Caco-2 (cell line): ENCODE measurements at regions of chr11 and their contacts with region 1.

Region 1: DNA sequence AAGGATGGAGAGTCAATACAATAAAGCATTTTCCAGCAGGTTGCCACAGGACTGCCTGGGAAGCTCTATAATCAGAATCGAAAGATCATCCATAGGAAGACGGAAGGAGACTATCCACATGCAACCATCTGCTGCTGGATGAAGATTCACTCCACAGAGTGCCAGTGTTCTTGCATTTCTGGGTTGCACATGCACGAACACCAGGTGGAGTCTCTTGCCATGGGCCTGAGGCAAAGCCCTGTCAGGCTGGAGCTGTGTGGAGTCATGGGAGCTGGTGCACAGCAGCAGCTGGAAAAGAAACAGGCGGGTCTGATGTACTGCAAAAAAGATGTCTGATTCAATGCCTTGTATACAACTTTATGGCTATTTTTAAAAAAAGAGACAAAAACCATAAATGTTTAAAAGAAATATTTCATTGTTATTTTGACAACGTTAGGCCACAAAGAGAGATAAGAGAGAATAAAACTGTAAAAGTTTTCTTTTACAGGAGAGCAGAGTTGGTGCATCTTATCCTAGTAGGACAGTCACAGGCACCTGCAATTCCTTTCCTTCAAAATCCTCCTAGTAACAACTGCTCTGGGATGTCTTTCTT is 12.9 kb upstream of the FAT3 start:
- DNase-seq: peak; percentile 80 to 82
- H3K4me3 ChIP-seq: no peak overlapping the region
- H3K4me3 Mint-ChIP-seq: no peak overlapping the region
- H3K27ac Mint-ChIP-seq: no peak overlapping the region
- H3K4me1 ChIP-seq: peaks cover 11% of the 10 kb centered on the region; the same call in 1 of the 2 replicates
- H3K4me1 Mint-ChIP-seq: peaks cover 17% of the 10 kb centered on the region
- H3K27me3 ChIP-seq: no peaks in the 10 kb centered on the region
- H3K27me3 Mint-ChIP-seq: no peaks in the 10 kb centered on the region
- CTCF ChIP-seq: peak; percentile 85 to 90

Region 2: DNA sequence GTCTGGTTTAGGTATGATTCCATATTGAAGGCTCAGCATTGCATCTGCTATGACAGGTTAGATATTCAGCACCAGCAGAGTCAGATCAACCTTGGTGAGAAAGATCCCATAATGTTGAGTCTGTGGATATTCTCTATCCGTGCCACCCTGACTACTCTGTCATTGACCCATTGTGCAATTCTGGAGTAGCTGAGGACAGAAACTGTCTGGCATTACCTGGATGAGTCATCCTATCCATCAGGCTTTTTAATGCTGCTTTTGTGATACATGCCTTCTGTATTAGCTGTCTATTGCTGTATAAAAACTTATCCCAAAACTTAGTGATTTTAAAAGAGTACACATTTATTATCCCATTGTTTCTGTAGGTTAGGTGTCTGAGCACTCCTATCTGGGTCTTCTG is 176.2 kb before region 1 on chr11:
- CTCF ChIA-PET with region 1: no interaction called
- POLR2A ChIA-PET with region 1: no interaction called
- intact Hi-C with region 1: no loop called
- DNase-seq: no peak
- H3K4me3 ChIP-seq: no peak overlapping the region
- H3K4me3 Mint-ChIP-seq: no peak overlapping the region
- H3K27ac Mint-ChIP-seq: no peak overlapping the region
- H3K4me1 ChIP-seq: no peaks in the 10 kb centered on the region
- H3K4me1 Mint-ChIP-seq: no peaks in the 10 kb centered on the region
- H3K27me3 ChIP-seq: no peaks in the 10 kb centered on the region
- H3K27me3 Mint-ChIP-seq: no peaks in the 10 kb centered on the region
- CTCF ChIP-seq: no peak

Region 3: GRCh38 chr11:92136797-92137196 is 74.9 kb before region 1 on chr11:
- CTCF ChIA-PET with region 1: no interaction called
- POLR2A ChIA-PET with region 1: no interaction called
- intact Hi-C with region 1: no loop called
- DNase-seq: peak in 1 of 2 experiments; percentile 39
- H3K4me3 ChIP-seq: no peak overlapping the region
- H3K4me3 Mint-ChIP-seq: no peak overlapping the region
- H3K27ac Mint-ChIP-seq: no peak overlapping the region
- H3K4me1 ChIP-seq: no peaks in the 10 kb centered on the region
- H3K4me1 Mint-ChIP-seq: no peaks in the 10 kb centered on the region
- H3K27me3 ChIP-seq: no peaks in the 10 kb centered on the region
- H3K27me3 Mint-ChIP-seq: no peaks in the 10 kb centered on the region
- CTCF ChIP-seq: peak; percentile 31 to 68

Region 4: DNA sequence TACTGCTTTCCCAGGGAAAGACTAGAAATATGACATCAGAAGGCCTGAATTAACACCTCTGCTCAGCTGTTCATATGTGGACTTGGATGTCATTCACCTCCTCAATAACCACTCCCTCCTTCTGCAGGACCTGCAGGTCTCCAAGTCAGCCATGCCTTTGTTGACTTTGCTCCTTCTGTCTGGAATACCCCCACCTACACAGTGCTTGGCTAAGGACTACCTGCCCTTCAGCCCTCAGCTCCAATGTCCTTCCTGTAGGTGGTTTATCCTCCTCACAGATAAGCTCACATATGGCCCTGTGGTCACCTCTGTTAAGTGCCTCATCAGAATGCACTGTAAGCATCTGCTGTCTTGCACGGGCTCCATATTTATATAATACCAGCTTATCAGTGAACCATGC is 13.4 kb before region 1 on chr11:
- CTCF ChIA-PET with region 1: no interaction called
- POLR2A ChIA-PET with region 1: no interaction called
- intact Hi-C with region 1: no loop called
- DNase-seq: no peak
- H3K4me3 ChIP-seq: no peak overlapping the region
- H3K4me3 Mint-ChIP-seq: no peak overlapping the region
- H3K27ac Mint-ChIP-seq: no peak overlapping the region
- H3K4me1 ChIP-seq: no peaks in the 10 kb centered on the region
- H3K4me1 Mint-ChIP-seq: no peaks in the 10 kb centered on the region
- H3K27me3 ChIP-seq: no peaks in the 10 kb centered on the region
- H3K27me3 Mint-ChIP-seq: no peaks in the 10 kb centered on the region
- CTCF ChIP-seq: no peak

Region 5: GRCh38 chr11:92269021-92269420 is 57.3 kb after region 1 on chr11:
- CTCF ChIA-PET with region 1: no interaction called
- POLR2A ChIA-PET with region 1: no interaction called
- intact Hi-C with region 1: loop called (anchors 5 kb)
- DNase-seq: peak; percentile 62 to 67
- H3K4me3 ChIP-seq: no peak overlapping the region
- H3K4me3 Mint-ChIP-seq: no peak overlapping the region
- H3K27ac Mint-ChIP-seq: peak overlapping the region; percentile 70
- H3K4me1 ChIP-seq: peaks cover 43% of the 10 kb centered on the region
- H3K4me1 Mint-ChIP-seq: peaks cover 63% of the 10 kb centered on the region
- H3K27me3 ChIP-seq: no peaks in the 10 kb centered on the region
- H3K27me3 Mint-ChIP-seq: no peaks in the 10 kb centered on the region
- CTCF ChIP-seq: no peak

Region 6: DNA sequence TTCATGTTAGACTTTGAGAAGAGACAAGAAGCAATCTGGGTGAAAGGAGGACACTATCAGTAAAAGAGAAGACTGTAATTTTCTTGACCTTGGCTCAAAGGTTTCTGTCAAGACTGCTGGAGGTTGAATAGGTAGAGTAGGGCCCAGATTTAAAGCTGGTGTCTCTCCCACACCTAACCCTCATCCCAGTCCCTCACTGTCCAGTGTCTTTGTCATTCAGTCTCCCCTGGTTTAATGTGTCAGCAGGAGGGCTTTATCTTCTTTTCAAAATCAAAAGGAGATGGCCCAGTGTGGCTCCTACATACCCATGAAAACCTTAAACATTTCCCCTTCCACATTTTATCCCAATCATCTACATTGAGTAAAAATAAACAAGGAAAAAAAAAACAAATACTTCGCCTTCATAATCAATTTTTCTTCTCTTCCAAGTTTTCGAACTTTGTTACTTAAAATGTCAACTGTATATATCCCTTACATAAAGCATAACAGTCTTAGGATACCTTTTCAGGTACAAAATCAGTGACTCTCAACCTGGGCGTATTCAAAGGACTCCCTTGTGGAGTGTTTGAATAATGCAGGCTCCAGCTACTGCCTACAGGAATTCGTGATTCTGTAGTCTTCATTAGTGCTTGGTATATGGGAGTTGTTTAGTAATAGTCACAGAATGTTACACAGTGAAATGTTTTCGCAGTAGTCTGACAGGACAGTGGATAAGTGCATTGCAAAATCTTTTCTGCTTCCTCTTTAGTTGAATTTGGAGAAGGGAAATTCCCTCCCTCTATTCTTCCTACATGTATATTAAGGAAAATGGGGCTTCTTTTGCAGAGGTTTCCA is 100.2 kb after region 1 on chr11:
- CTCF ChIA-PET with region 1: interaction called, 5 read pairs
- POLR2A ChIA-PET with region 1: no interaction called
- intact Hi-C with region 1: loop called (anchors 10 kb)
- DNase-seq: no peak
- H3K4me3 ChIP-seq: no peak overlapping the region
- H3K4me3 Mint-ChIP-seq: no peak overlapping the region
- H3K27ac Mint-ChIP-seq: no peak overlapping the region
- H3K4me1 ChIP-seq: no peaks in the 10 kb centered on the region
- H3K4me1 Mint-ChIP-seq: no peaks in the 10 kb centered on the region
- H3K27me3 ChIP-seq: no peaks in the 10 kb centered on the region
- H3K27me3 Mint-ChIP-seq: no peaks in the 10 kb centered on the region
- CTCF ChIP-seq: peak in 1 of 2 experiments; percentile 27

Region 7: DNA sequence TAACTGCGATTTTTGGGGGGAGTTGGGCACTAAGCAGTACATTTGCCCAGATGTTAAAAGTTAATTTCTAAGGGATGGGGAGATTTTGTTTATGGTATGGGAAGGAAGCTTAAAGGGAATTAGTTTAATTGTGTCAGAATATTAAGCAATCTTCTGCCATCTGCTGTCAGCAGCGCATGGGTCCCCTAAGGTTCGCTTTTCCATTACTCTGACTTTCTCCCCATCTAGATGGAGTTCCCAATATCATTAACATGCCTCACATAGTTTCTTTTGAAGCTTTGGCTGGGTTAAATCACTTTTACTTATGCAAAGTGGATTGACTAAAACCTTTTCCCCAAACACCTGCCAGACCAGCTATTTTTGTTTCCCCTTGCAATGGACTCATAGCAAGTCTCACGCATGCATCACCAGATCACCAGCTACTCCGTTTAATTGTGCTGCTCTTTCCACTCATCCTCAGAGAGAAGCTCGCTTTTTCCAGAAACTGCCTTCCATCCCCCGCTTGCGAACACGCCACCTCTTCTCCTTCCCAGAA is 185.6 kb after region 1 on chr11:
- CTCF ChIA-PET with region 1: interaction called, 3 read pairs
- POLR2A ChIA-PET with region 1: no interaction called
- intact Hi-C with region 1: loop called (anchors 1 kb)
- DNase-seq: no peak
- H3K4me3 ChIP-seq: no peak overlapping the region
- H3K4me3 Mint-ChIP-seq: no peak overlapping the region
- H3K27ac Mint-ChIP-seq: no peak overlapping the region
- H3K4me1 ChIP-seq: peaks cover 9% of the 10 kb centered on the region
- H3K4me1 Mint-ChIP-seq: peaks cover 16% of the 10 kb centered on the region
- H3K27me3 ChIP-seq: no peaks in the 10 kb centered on the region
- H3K27me3 Mint-ChIP-seq: no peaks in the 10 kb centered on the region
- CTCF ChIP-seq: no peak

Region 8: DNA sequence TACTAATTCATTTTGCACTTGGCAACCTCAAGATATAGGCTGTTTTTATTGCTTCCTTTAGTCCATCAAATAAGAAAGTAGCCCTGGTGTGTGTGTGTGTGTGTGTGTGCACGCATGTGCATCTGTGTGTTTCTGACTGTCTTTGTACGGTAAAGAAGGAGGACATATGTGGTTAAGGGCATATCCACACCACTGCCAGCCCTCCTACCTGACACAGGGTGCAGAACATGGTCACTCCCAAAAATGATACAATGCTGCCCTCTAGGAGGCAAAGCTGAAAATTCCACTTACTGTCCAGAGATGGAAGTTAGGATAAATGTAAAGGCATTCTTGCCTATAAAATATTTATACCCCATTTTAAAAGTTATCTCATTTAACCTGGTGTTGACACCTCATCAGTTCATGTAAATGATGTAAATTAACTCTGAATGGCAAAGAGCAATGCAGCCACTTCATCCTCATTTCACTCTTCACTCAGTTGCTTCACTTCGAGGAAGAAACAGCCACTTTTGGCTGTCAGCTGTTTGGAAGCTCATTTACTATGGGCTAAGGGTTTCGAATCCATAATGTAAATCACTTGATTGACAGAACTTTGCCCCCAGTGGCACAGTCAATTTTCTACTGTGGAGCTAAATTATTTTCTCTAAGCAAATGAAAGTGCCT is 674.7 kb after region 1 on chr11:
- CTCF ChIA-PET with region 1: interaction called, 5 read pairs
- POLR2A ChIA-PET with region 1: no interaction called
- intact Hi-C with region 1: loop called (anchors 1 kb)
- DNase-seq: peak; percentile 68 to 77
- H3K4me3 ChIP-seq: no peak overlapping the region
- H3K4me3 Mint-ChIP-seq: no peak overlapping the region
- H3K27ac Mint-ChIP-seq: no peak overlapping the region
- H3K4me1 ChIP-seq: no peaks in the 10 kb centered on the region
- H3K4me1 Mint-ChIP-seq: no peaks in the 10 kb centered on the region
- H3K27me3 ChIP-seq: no peaks in the 10 kb centered on the region
- H3K27me3 Mint-ChIP-seq: peaks cover 13% of the 10 kb centered on the region
- CTCF ChIP-seq: peak; percentile 85 to 89